Psoas muscle (tissue), 8 donors: ENCODE measurements at regions of chr1 and their contacts with region 1.

Region 1: GRCh38 chr1:202750758-202751157 is 40.5 kb upstream of the SYT2 start:
- DNase-seq: no peak
- ATAC-seq: no peak
- H3K4me3 ChIP-seq: no peak overlapping the region
- H3K27ac ChIP-seq: no peak overlapping the region
- H3K4me1 ChIP-seq: no peaks in the 10 kb centered on the region
- H3K27me3 ChIP-seq: no peaks in the 10 kb centered on the region
- CTCF ChIP-seq: peak; percentile 18

Region 2: DNA sequence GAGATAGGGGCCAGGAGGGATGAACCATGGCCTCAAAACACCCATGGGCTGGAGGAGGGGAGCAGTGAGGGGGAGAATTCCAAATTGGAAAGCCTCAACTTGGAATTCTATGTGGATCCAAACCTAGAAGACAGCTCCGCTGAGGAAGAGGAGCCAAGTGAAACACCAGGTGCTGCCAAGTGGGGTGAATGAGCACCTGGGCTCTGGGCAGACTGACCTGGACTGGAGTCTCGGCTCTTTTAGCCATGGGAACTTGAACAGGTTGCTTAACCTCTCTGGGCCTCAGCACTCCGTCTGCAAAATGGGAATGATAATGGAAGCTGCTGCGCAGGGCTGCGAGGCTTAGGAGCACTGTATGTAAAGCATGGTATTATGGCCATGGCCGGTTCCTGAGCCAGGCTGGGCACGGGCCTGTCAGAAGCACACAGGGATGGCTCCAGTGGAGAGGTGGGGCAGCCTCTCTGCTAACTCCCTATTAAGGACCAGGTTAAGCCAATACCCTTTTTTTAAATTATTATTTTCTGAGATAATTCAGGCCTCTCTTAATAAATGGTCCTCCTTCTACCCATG is 122.0 kb before region 1 on chr1:
- intact Hi-C with region 1: no loop called
- DNase-seq: peak in 1 of 2 donors; percentile 28
- ATAC-seq: no peak
- H3K4me3 ChIP-seq: no peak overlapping the region
- H3K27ac ChIP-seq: no peak overlapping the region
- H3K4me1 ChIP-seq: no peaks in the 10 kb centered on the region
- H3K27me3 ChIP-seq: peaks cover 0 to 14% (median 5%) of the 10 kb centered on the region in 3 donors
- CTCF ChIP-seq: no peak

Region 3: GRCh38 chr1:202915146-202915545 is 164.4 kb after region 1 on chr1:
- intact Hi-C with region 1: loop called in 1 of 2 experiments (anchors 10 kb)
- DNase-seq: no peak
- ATAC-seq: no peak
- H3K4me3 ChIP-seq: no peak overlapping the region
- H3K27ac ChIP-seq: no peak overlapping the region
- H3K4me1 ChIP-seq: no peaks in the 10 kb centered on the region
- H3K27me3 ChIP-seq: no peaks in the 10 kb centered on the region
- CTCF ChIP-seq: no peak

Region 4: GRCh38 chr1:202968840-202969295 is 218.1 kb after region 1 on chr1:
- intact Hi-C with region 1: no loop called
- DNase-seq: peak in 1 of 2 donors; percentile 26
- ATAC-seq: peak in 2 of 4 donors; percentile 20 to 23
- H3K4me3 ChIP-seq: no peak overlapping the region
- H3K27ac ChIP-seq: peak overlapping the region; percentile 99
- H3K4me1 ChIP-seq: peaks cover 10% of the 10 kb centered on the region
- H3K27me3 ChIP-seq: no peaks in the 10 kb centered on the region
- CTCF ChIP-seq: peak; percentile 58